Naive thymus-derived CD4-positive, alpha-beta T cell (primary cell): ENCODE measurements at regions of chr3 and their contacts with region 1.

Region 1: DNA sequence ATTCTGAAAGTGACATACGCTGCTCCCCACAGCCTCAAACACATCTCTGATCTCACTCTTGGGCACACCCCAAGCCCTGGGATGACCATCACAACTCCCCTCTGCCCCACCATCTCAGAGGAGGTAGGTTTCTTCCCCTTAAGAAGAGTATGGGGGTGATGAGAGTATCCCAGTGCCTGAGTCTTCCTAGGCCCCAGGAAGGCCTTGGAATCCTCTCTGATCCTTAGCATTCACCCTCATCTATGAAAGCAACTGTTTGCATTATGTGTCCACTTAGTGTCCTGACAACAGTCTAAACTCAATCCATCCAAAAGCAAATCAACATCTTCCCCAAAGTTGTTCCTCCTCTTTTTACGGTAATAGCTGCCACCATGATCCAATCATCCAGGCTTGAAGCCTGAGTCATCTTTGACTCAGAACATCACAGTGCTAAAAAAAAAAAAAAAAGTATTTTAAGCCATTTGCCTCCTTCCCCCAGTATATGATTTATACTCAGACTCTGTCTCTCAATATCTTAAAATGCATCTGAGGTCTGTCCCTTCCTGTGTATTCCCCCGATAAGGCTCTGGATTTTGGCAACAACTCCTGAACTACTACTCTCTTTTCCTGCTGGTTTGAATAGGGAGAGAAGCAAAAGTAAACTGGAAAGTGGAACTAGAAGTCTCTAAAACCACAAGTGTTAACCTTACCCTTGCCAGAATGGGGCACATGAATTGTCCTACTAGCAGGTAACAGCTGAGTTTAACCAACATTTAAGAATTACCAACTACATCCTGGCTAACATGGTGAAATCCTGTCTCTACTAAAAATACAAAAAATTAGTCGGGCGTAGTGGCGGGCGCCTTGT is 22.5 kb downstream of the POPDC2 start:
- DNase-seq: no peak
- ATAC-seq: peak; percentile 63
- H3K4me3 ChIP-seq: no peak overlapping the region
- H3K4me3 Mint-ChIP-seq: peak overlapping the region in 1 of 10 donors; percentile 59
- H3K27ac ChIP-seq: no peak overlapping the region
- H3K27ac Mint-ChIP-seq: peak overlapping the region in 1 of 9 donors; percentile 88
- H3K4me1 ChIP-seq: no peaks in the 10 kb centered on the region
- H3K4me1 Mint-ChIP-seq: peaks cover 0 to 43% (median 0%) of the 10 kb centered on the region in 7 donors
- H3K27me3 ChIP-seq: no peaks in the 10 kb centered on the region
- H3K27me3 Mint-ChIP-seq: no peaks in the 10 kb centered on the region

Region 2: GRCh38 chr3:119221839-119222238 is 416.1 kb before region 1 on chr3:
- CTCF ChIA-PET with region 1: no interaction called
- POLR2A ChIA-PET with region 1: no interaction called
- intact Hi-C with region 1: no loop called
- DNase-seq: no peak
- ATAC-seq: no peak
- H3K4me3 ChIP-seq: no peak overlapping the region
- H3K4me3 Mint-ChIP-seq: peak overlapping the region in 1 of 10 donors; percentile 17
- H3K27ac ChIP-seq: peak overlapping the region; percentile 19
- H3K27ac Mint-ChIP-seq: peak overlapping the region in 8 of 9 donors; percentile 89 to 99 (median 94)
- H3K4me1 ChIP-seq: peaks cover 9 to 43% of the 10 kb centered on the region in 2 donors
- H3K4me1 Mint-ChIP-seq: peaks cover 26 to 86% (median 77%) of the 10 kb centered on the region in 7 donors
- H3K27me3 ChIP-seq: no peaks in the 10 kb centered on the region
- H3K27me3 Mint-ChIP-seq: no peaks in the 10 kb centered on the region

Region 3: GRCh38 chr3:119322835-119323722 is 314.8 kb before region 1 on chr3:
- CTCF ChIA-PET with region 1: no interaction called
- POLR2A ChIA-PET with region 1: no interaction called
- intact Hi-C with region 1: loop called in 1 of 2 experiments (anchors 2 kb)
- DNase-seq: peak; percentile 77 to 96 (median 81)
- ATAC-seq: peak; percentile 90
- H3K4me3 ChIP-seq: peak overlapping the region; percentile 65
- H3K4me3 Mint-ChIP-seq: peak overlapping the region; percentile 84 to 96 (median 90)
- H3K27ac ChIP-seq: peak overlapping the region; percentile 81
- H3K27ac Mint-ChIP-seq: peak overlapping the region; percentile 90 to 99 (median 95)
- H3K4me1 ChIP-seq: peaks cover 10 to 14% of the 10 kb centered on the region in 2 donors
- H3K4me1 Mint-ChIP-seq: peaks cover 12 to 30% (median 21%) of the 10 kb centered on the region in 7 donors
- H3K27me3 ChIP-seq: no peaks in the 10 kb centered on the region
- H3K27me3 Mint-ChIP-seq: peaks cover 0 to 57% (median 0%) of the 10 kb centered on the region in 5 donors

Region 4: GRCh38 chr3:119559441-119559963 is 78.4 kb before region 1 on chr3 and contains the start of gene CD80:
- CTCF ChIA-PET with region 1: no interaction called
- POLR2A ChIA-PET with region 1: no interaction called
- intact Hi-C with region 1: loop called in 1 of 2 experiments (anchors 1 kb)
- DNase-seq: peak in 7 of 9 donors; percentile 14 to 63 (median 33)
- ATAC-seq: peak; percentile 76
- H3K4me3 ChIP-seq: no peak within 1 kb of the TSS
- H3K4me3 Mint-ChIP-seq: peak within 1 kb of the TSS in 2 of 10 donors; percentile 12 to 81
- H3K27ac ChIP-seq: no peak within 1 kb of the TSS
- H3K27ac Mint-ChIP-seq: peak within 1 kb of the TSS in 2 of 9 donors; percentile 68 to 71
- H3K4me1 ChIP-seq: peaks cover 0 to 6% of the 10 kb centered on the region in 2 donors
- H3K4me1 Mint-ChIP-seq: peaks cover 0 to 64% (median 8%) of the 10 kb centered on the region in 7 donors
- H3K27me3 ChIP-seq: no peaks in the 10 kb centered on the region
- H3K27me3 Mint-ChIP-seq: peaks cover 0 to 5% (median 0%) of the 10 kb centered on the region in 5 donors
- total RNA-seq, gene CD80: 0.13 to 15.1 (median 1.2) TPM in 3 of 5 experiments, not detected in the others

Region 5: GRCh38 chr3:119702530-119703157 is 64.7 kb after region 1 on chr3 and contains the start of gene CFAP91:
- CTCF ChIA-PET with region 1: no interaction called
- POLR2A ChIA-PET with region 1: no interaction called
- intact Hi-C with region 1: loop called in 1 of 2 experiments (anchors 2 kb)
- DNase-seq: peak; percentile 56 to 81 (median 63)
- ATAC-seq: peak; percentile 97
- H3K4me3 ChIP-seq: peak within 1 kb of the TSS; percentile 61
- H3K4me3 Mint-ChIP-seq: peak within 1 kb of the TSS; percentile 67 to 87 (median 82)
- H3K27ac ChIP-seq: peak within 1 kb of the TSS; percentile 16
- H3K27ac Mint-ChIP-seq: peak within 1 kb of the TSS in 6 of 9 donors; percentile 15 to 47 (median 43)
- H3K4me1 ChIP-seq: peaks cover 0 to 13% of the 10 kb centered on the region in 2 donors
- H3K4me1 Mint-ChIP-seq: peaks cover 16 to 36% (median 30%) of the 10 kb centered on the region in 7 donors
- H3K27me3 ChIP-seq: no peaks in the 10 kb centered on the region
- H3K27me3 Mint-ChIP-seq: peaks cover 0 to 33% (median 3%) of the 10 kb centered on the region in 5 donors
- total RNA-seq, gene CFAP91: 0.13 to 0.32 TPM in 2 of 5 experiments, not detected in the others